ENCODE measurements at regions of chr2 and their contacts with region 1.

Region 1: DNA sequence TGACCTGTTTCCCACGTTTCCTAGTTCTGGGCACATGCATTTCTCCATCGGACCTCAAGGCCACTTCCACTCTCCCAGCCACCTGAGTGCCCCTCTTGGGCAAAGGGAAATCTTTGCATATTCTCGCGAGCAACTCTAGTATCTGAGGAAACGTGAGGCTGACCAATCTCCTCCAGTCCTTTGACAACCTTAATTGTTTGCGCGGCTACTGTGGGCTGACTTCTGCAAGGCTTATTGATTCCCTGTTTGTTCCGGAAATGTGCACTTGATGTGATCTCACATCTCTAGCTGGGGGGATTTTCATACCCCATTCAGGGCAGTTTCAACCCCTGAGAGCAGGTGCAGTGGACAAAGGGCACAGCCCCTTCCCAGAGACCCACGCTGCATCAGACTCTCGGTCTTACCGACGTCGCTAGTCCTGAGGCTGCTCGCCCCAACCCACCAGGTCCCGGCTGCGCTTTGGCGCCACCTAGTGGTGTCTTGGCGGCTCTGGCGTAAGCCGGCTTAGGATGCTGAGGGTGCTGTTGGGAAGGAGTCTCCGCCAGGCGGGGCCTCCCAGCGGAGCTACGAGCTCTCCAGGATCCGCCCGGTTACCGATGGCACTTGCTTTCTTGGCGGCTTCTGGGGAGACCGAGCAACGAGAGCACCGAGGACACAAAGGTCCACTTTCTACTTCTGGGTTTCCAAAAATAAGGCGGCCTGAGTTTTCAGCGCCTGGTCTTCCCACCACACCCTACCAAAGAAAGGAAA is 24.8 kb upstream of the SPR start:
- DNase-seq: no peak
- H3K4me3 ChIP-seq: peak overlapping the region; percentile 14; the same call in 1 of the 2 replicates
- H3K27me3 ChIP-seq: peaks cover 9% of the 10 kb centered on the region
- CTCF ChIP-seq: peak; percentile 100

Region 2: GRCh38 chr2:72757177-72757775 is 105.1 kb before region 1 on chr2:
- CTCF ChIA-PET with region 1: interaction called, 16 read pairs
- POLR2A ChIA-PET with region 1: no interaction called
- DNase-seq: no peak
- H3K4me3 ChIP-seq: no peak overlapping the region
- H3K27me3 ChIP-seq: no peaks in the 10 kb centered on the region
- CTCF ChIP-seq: no peak

Region 3: DNA sequence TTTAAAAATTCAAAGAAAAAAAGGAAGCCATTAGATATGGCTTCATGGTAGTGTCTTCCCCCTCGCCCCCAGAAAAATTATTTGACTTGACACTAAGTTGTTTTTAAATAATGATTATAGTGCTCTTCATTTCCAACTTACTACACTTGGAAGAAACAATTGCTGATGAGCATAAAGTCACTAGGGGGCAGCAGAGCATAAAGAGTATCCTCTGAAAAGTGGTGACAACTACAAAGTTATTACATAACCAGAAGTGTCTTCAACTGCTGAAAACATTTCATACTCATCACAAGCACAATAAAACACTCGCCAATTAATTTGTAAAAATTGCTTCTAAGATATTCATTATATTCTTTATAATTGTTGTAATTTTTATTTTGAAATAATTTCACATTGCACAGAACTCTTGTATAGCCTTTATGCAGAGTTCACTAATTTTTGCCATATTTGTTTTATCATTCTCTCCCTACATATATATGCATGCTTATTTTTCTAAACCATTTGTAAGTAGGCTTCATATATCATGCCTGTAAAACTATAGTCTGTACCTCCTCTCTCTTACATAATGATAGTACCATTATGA is 91.4 kb before region 1 on chr2:
- CTCF ChIA-PET with region 1: interaction called, 100 read pairs
- POLR2A ChIA-PET with region 1: no interaction called
- DNase-seq: peak; percentile 31
- H3K4me3 ChIP-seq: no peak overlapping the region
- H3K27me3 ChIP-seq: no peaks in the 10 kb centered on the region
- CTCF ChIP-seq: peak; percentile 76

Region 4: GRCh38 chr2:72780477-72780876 is 81.9 kb before region 1 on chr2:
- CTCF ChIA-PET with region 1: interaction called, 16 read pairs
- POLR2A ChIA-PET with region 1: no interaction called
- DNase-seq: no peak
- H3K4me3 ChIP-seq: no peak overlapping the region
- H3K27me3 ChIP-seq: no peaks in the 10 kb centered on the region
- CTCF ChIP-seq: no peak

Region 5: GRCh38 chr2:72833084-72833709 is 29.2 kb before region 1 on chr2:
- CTCF ChIA-PET with region 1: interaction called, 14 read pairs
- POLR2A ChIA-PET with region 1: no interaction called
- DNase-seq: no peak
- H3K4me3 ChIP-seq: no peak overlapping the region
- H3K27me3 ChIP-seq: no peaks in the 10 kb centered on the region; the same call in 1 of the 2 replicates
- CTCF ChIP-seq: no peak

Region 6: DNA sequence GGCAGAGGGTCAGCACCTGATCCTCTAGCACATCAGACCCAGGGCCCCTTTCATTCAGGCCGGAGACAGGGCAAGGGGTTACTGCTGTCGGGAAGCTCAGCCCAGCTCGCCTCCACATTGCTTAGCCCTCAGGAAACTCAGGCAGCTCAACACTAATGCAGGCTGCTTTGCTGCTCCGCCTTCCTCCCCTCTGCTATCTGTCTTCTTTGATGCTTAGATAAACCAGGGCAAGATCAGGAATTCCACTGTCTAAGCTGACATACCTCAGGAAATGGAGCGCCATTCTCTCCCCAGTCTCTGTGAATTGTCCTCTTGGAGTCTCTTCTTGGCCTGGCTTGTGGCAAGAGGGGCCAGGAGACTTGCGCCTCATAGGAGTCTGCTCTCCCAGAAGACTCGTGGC is 11.1 kb before region 1 on chr2:
- CTCF ChIA-PET with region 1: interaction called, 11 read pairs
- POLR2A ChIA-PET with region 1: no interaction called
- DNase-seq: no peak
- H3K4me3 ChIP-seq: no peak overlapping the region
- H3K27me3 ChIP-seq: peaks cover 16% of the 10 kb centered on the region
- CTCF ChIP-seq: no peak

Region 7: GRCh38 chr2:72953976-72954375 is 91.6 kb after region 1 on chr2:
- CTCF ChIA-PET with region 1: no interaction called
- POLR2A ChIA-PET with region 1: no interaction called
- DNase-seq: no peak
- H3K4me3 ChIP-seq: no peak overlapping the region
- H3K27me3 ChIP-seq: no peaks in the 10 kb centered on the region
- CTCF ChIP-seq: no peak

Region 8: GRCh38 chr2:73133566-73134197 is 271.3 kb after region 1 on chr2:
- CTCF ChIA-PET with region 1: no interaction called
- POLR2A ChIA-PET with region 1: no interaction called
- DNase-seq: no peak
- H3K4me3 ChIP-seq: no peak overlapping the region
- H3K27me3 ChIP-seq: no peaks in the 10 kb centered on the region; the same call in 1 of the 2 replicates
- CTCF ChIP-seq: no peak